Naive thymus-derived CD4-positive, alpha-beta T cell (primary cell): ENCODE measurements at regions of chr2 and their contacts with region 1.

Region 1: GRCh38 chr2:196225213-196225612 is 53.8 kb upstream of the STK17B start:
- DNase-seq: no peak
- ATAC-seq: no peak
- H3K4me3 ChIP-seq: no peak overlapping the region
- H3K4me3 Mint-ChIP-seq: peak overlapping the region in 3 of 10 donors; percentile 17 to 37 (median 17)
- H3K27ac ChIP-seq: no peak overlapping the region
- H3K27ac Mint-ChIP-seq: peak overlapping the region in 7 of 9 donors; percentile 14 to 97 (median 50)
- H3K4me1 ChIP-seq: peaks cover 13 to 70% of the 10 kb centered on the region in 2 donors
- H3K4me1 Mint-ChIP-seq: peaks cover 48 to 88% (median 85%) of the 10 kb centered on the region in 7 donors
- H3K27me3 ChIP-seq: no peaks in the 10 kb centered on the region
- H3K27me3 Mint-ChIP-seq: no peaks in the 10 kb centered on the region

Region 2: DNA sequence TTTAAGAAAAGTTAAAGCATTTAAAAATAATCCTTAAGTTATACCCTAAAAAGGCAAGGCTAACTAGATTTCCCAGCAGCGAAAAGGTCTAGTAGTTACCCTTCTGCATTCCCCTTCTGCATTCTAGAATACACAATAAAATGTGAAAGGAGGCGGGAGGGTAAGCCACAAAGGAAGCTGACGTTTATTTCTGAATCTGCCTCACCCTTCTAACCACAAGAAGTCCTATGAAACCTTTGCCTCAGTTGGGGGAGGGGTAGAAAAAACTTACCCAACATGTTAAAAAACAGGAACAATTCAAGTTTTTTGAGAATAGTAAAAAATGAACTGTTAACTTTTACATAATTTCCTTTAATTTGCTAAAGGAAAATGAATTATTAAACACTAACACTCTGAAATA is 65.1 kb before region 1 on chr2:
- CTCF ChIA-PET with region 1: interaction called, 63 read pairs
- POLR2A ChIA-PET with region 1: interaction called, 98 read pairs
- intact Hi-C with region 1: loop called in 1 of 2 experiments (anchors 1 kb)
- DNase-seq: peak in 8 of 9 donors; percentile 61 to 92 (median 88)
- ATAC-seq: peak; percentile 84
- H3K4me3 ChIP-seq: peak overlapping the region; percentile 33
- H3K4me3 Mint-ChIP-seq: peak overlapping the region; percentile 61 to 98 (median 87)
- H3K27ac ChIP-seq: peak overlapping the region; percentile 94
- H3K27ac Mint-ChIP-seq: peak overlapping the region; percentile 84 to 98 (median 94)
- H3K4me1 ChIP-seq: peaks cover 53 to 65% of the 10 kb centered on the region in 2 donors
- H3K4me1 Mint-ChIP-seq: peaks cover 45 to 85% (median 69%) of the 10 kb centered on the region in 7 donors
- H3K27me3 ChIP-seq: no peaks in the 10 kb centered on the region
- H3K27me3 Mint-ChIP-seq: no peaks in the 10 kb centered on the region

Region 3: GRCh38 chr2:196205881-196206435 is 19.3 kb before region 1 on chr2:
- CTCF ChIA-PET with region 1: interaction called, 16 read pairs
- POLR2A ChIA-PET with region 1: interaction called, 17 read pairs
- intact Hi-C with region 1: loop called (anchors 1 kb)
- DNase-seq: no peak
- ATAC-seq: no peak
- H3K4me3 ChIP-seq: no peak overlapping the region
- H3K4me3 Mint-ChIP-seq: no peak overlapping the region
- H3K27ac ChIP-seq: no peak overlapping the region
- H3K27ac Mint-ChIP-seq: peak overlapping the region in 7 of 9 donors; percentile 28 to 85 (median 66)
- H3K4me1 ChIP-seq: peaks cover 17 to 31% of the 10 kb centered on the region in 2 donors
- H3K4me1 Mint-ChIP-seq: peaks cover 29 to 75% (median 51%) of the 10 kb centered on the region in 7 donors
- H3K27me3 ChIP-seq: no peaks in the 10 kb centered on the region
- H3K27me3 Mint-ChIP-seq: no peaks in the 10 kb centered on the region

Region 4: GRCh38 chr2:196263181-196263747 is 38.1 kb after region 1 on chr2:
- CTCF ChIA-PET with region 1: interaction called, 6 read pairs
- POLR2A ChIA-PET with region 1: interaction called, 97 read pairs
- intact Hi-C with region 1: no loop called
- DNase-seq: peak in 7 of 9 donors; percentile 70 to 88 (median 83)
- ATAC-seq: peak; percentile 90
- H3K4me3 ChIP-seq: peak overlapping the region; percentile 31
- H3K4me3 Mint-ChIP-seq: peak overlapping the region; percentile 63 to 90 (median 82)
- H3K27ac ChIP-seq: peak overlapping the region; percentile 87
- H3K27ac Mint-ChIP-seq: peak overlapping the region; percentile 90 to 99 (median 97)
- H3K4me1 ChIP-seq: peaks cover 53 to 82% of the 10 kb centered on the region in 2 donors
- H3K4me1 Mint-ChIP-seq: peaks cover 39 to 94% (median 89%) of the 10 kb centered on the region in 7 donors
- H3K27me3 ChIP-seq: no peaks in the 10 kb centered on the region
- H3K27me3 Mint-ChIP-seq: no peaks in the 10 kb centered on the region

Region 5: GRCh38 chr2:196337208-196337953 is 112.2 kb after region 1 on chr2:
- CTCF ChIA-PET with region 1: interaction called, 9 read pairs
- POLR2A ChIA-PET with region 1: no interaction called
- intact Hi-C with region 1: loop called in 1 of 2 experiments (anchors 2 kb)
- DNase-seq: peak in 5 of 9 donors; percentile 10 to 39 (median 19)
- ATAC-seq: peak; percentile 52
- H3K4me3 ChIP-seq: no peak overlapping the region
- H3K4me3 Mint-ChIP-seq: no peak overlapping the region
- H3K27ac ChIP-seq: no peak overlapping the region
- H3K27ac Mint-ChIP-seq: no peak overlapping the region
- H3K4me1 ChIP-seq: no peaks in the 10 kb centered on the region
- H3K4me1 Mint-ChIP-seq: peaks cover 0 to 6% (median 1%) of the 10 kb centered on the region in 7 donors
- H3K27me3 ChIP-seq: no peaks in the 10 kb centered on the region
- H3K27me3 Mint-ChIP-seq: peaks cover 0 to 18% (median 3%) of the 10 kb centered on the region in 5 donors